ENCODE measurements at regions of chr2 and their contacts with region 1.

Region 1: GRCh38 chr2:128027801-128028667 is at the start of gene SAP130:
- DNase-seq: peak; percentile 99
- H3K4me3 Mint-ChIP-seq: peak within 1 kb of the TSS; percentile 89
- H3K27ac Mint-ChIP-seq: peak within 1 kb of the TSS; percentile 92
- H3K4me1 Mint-ChIP-seq: peaks cover 17% of the 10 kb centered on the region
- H3K27me3 Mint-ChIP-seq: peaks cover 15% of the 10 kb centered on the region
- total RNA-seq, gene SAP130: 29.8 and 32.0 TPM in 2 replicates

Region 2: GRCh38 chr2:127293748-127294562 is 734.1 kb before region 1 on chr2 and contains the start of gene ERCC3:
- intact Hi-C with region 1: loop called (anchors 10 kb)
- DNase-seq: peak; percentile 95
- H3K4me3 Mint-ChIP-seq: peak within 1 kb of the TSS; percentile 99
- H3K27ac Mint-ChIP-seq: peak within 1 kb of the TSS; percentile 98
- H3K4me1 Mint-ChIP-seq: peaks cover 23% of the 10 kb centered on the region
- H3K27me3 Mint-ChIP-seq: no peaks in the 10 kb centered on the region
- total RNA-seq, gene ERCC3: 58.1 and 60.2 TPM in 2 replicates

Region 3: GRCh38 chr2:127810619-127811396 is 217.2 kb before region 1 on chr2 and contains the start of gene WDR33:
- intact Hi-C with region 1: loop called (anchors 2 kb)
- DNase-seq: peak; percentile 98
- H3K4me3 Mint-ChIP-seq: peak within 1 kb of the TSS; percentile 86
- H3K27ac Mint-ChIP-seq: peak within 1 kb of the TSS; percentile 98
- H3K4me1 Mint-ChIP-seq: peaks cover 34% of the 10 kb centered on the region
- H3K27me3 Mint-ChIP-seq: peaks cover 1% of the 10 kb centered on the region
- total RNA-seq, gene WDR33: 76.7 and 79.5 TPM in 2 replicates

Region 4: DNA sequence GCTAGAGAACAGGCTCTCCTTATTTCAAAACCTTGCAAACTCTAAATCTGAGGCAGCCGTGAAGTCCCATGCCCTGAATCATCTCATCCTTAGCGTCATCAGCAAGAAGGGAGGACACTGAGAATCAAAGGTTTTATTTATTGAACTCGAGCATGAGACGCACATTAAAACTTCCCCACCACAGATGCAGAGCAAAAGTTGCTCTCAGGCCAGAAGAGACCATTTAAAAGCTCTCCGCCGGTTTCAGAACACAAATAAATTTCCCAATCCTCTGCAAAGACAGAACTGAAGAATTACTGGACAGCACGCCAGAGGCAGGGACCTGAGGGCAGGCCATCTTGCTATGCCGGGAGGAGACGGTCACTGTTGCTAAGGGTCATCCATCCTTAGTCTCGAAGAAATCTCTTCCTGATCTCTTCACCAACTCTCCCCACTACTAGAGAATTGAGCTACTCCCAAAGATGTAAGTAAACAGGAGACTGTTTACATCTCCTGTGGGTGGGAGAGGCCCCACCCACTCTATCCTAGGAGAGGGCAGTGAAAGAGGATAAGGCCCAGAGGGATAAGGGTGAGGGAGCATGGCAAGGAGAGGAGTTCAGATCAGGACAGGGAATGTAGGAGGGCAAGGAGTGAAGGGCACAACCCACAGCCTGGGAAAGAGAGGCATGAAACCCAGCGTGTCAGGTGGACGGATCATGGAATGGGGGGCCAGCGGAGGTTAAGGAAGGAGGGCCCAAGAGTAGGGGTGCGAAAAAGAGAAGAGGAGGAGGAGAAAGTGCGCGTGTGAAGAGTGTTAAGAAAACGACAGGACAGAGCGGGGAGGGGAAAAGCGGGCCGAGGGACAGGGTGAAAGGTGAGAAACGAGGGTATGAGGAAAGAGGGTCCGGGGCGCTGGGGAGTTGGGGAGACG is 143.3 kb before region 1 on chr2:
- intact Hi-C with region 1: loop called (anchors 2 kb)
- DNase-seq: no peak
- H3K4me3 Mint-ChIP-seq: peak overlapping the region; percentile 95
- H3K27ac Mint-ChIP-seq: peak overlapping the region; percentile 76
- H3K4me1 Mint-ChIP-seq: peaks cover 40% of the 10 kb centered on the region
- H3K27me3 Mint-ChIP-seq: no peaks in the 10 kb centered on the region

Region 5: GRCh38 chr2:128178650-128179460 is 150.8 kb after region 1 on chr2:
- intact Hi-C with region 1: no loop called
- DNase-seq: peak; percentile 85
- H3K4me3 Mint-ChIP-seq: no peak overlapping the region
- H3K27ac Mint-ChIP-seq: no peak overlapping the region
- H3K4me1 Mint-ChIP-seq: peaks cover 7% of the 10 kb centered on the region
- H3K27me3 Mint-ChIP-seq: no peaks in the 10 kb centered on the region

Measured in activated CD4-positive, alpha-beta T cell treated with anti-CD3 and anti-CD28 coated beads, Interleukin-2, amount 10 ng/mL, durations not matched to agents 24 days and 14 days (primary cell).